ENCODE measurements at regions of chr5 and their contacts with region 1.

Region 1: DNA sequence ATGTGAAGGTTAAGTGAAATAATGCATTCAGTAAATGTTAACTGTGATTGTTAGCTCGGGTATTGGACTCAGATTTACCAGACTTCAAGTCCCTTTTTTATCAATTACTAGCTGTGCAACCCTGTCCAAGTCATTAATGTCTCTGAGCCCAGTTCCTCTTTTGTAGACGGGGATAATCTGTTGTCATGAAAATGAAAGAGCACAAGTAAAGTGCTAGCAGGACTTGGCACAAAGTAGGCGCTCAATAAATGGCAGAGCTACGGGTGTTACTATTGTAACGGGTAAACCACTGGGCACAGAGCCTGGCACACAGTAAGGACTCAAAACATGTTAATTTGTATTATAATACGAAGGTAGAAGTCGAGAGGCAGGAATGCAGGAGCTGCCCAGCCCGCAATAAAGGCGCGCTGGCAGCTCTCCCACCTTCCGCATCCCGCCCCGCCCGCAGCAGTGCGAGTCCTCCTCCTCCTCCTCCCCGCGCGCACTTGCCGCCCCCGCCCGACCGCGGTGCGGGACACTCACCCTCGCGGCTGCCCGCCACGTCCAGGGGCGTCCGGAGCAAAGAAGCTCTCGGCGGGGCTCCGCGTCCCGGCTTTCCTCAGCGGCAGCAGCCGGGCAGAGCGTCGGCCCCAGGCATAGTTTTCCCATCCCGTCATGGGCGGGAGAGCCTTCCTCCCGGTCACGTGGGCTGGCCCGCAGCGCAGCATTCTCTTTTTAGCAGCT is at the start of gene C1QTNF2:
- DNase-seq: peak in 1 of 2 experiments; percentile 74
- H3K4me3 ChIP-seq: peak within 1 kb of the TSS; percentile 29 to 67 (median 46)
- H3K27ac ChIP-seq: no peak within 1 kb of the TSS
- H3K4me1 ChIP-seq: peaks cover 3 to 5% (median 4%) of the 10 kb centered on the region in 4 experiments; a peak in 4 of 7 replicates
- H3K27me3 ChIP-seq: peaks cover 1 to 15% (median 10%) of the 10 kb centered on the region in 4 experiments
- CTCF ChIP-seq: no peak
- EP300 ChIP-seq: no peak
- POLR2A ChIP-seq: no peak
- RAD21 ChIP-seq: no peak
- total RNA-seq, gene C1QTNF2: 1.0 and 1.3 TPM in 2 replicates

Region 2: GRCh38 chr5:160357861-160358411 is 12.2 kb before region 1 on chr5:
- CTCF ChIA-PET with region 1: interaction called, 11 read pairs
- POLR2A ChIA-PET with region 1: interaction called, 4 read pairs
- DNase-seq: no peak
- H3K4me3 ChIP-seq: no peak overlapping the region
- H3K27ac ChIP-seq: no peak overlapping the region
- H3K4me1 ChIP-seq: peaks cover 0 to 2% (median 1%) of the 10 kb centered on the region in 4 experiments; a peak in 6 of 7 replicates
- H3K27me3 ChIP-seq: no peaks in the 10 kb centered on the region; a peak in 1 of 7 replicates
- CTCF ChIP-seq: no peak
- EP300 ChIP-seq: no peak
- POLR2A ChIP-seq: no peak
- RAD21 ChIP-seq: no peak

Region 3: GRCh38 chr5:160418561-160419457 is 48.7 kb after region 1 on chr5 and contains the start of gene SLU7:
- CTCF ChIA-PET with region 1: no interaction called
- POLR2A ChIA-PET with region 1: no interaction called
- DNase-seq: peak; percentile 71 to 94
- H3K4me3 ChIP-seq: peak within 1 kb of the TSS; percentile 83 to 95 (median 94)
- H3K27ac ChIP-seq: peak within 1 kb of the TSS; percentile 60; the same call in 1 of the 2 replicates
- H3K4me1 ChIP-seq: peaks cover 0 to 8% (median 4%) of the 10 kb centered on the region in 4 experiments; a peak in 3 of 7 replicates
- H3K27me3 ChIP-seq: no peaks in the 10 kb centered on the region
- CTCF ChIP-seq: no peak
- EP300 ChIP-seq: no peak
- POLR2A ChIP-seq: peak in 1 of 2 experiments; percentile 79; a peak in 2 of 3 replicates
- RAD21 ChIP-seq: no peak
- total RNA-seq, gene SLU7: 34.1 and 36.8 TPM in 2 replicates

Measured in H1 (cell line).